ENCODE measurements at regions of chr1 and their contacts with region 1.

Region 1: GRCh38 chr1:237386362-237387143 is 344.6 kb downstream of the RYR2 start:
- DNase-seq: peak; percentile 38
- ATAC-seq: no peak
- H3K4me3 ChIP-seq: no peak overlapping the region
- H3K27ac ChIP-seq: no peak overlapping the region
- H3K4me1 ChIP-seq: no peaks in the 10 kb centered on the region
- H3K27me3 ChIP-seq: no peaks in the 10 kb centered on the region
- CTCF ChIP-seq: peak; percentile 82; the same call in 1 of the 2 replicates

Region 2: DNA sequence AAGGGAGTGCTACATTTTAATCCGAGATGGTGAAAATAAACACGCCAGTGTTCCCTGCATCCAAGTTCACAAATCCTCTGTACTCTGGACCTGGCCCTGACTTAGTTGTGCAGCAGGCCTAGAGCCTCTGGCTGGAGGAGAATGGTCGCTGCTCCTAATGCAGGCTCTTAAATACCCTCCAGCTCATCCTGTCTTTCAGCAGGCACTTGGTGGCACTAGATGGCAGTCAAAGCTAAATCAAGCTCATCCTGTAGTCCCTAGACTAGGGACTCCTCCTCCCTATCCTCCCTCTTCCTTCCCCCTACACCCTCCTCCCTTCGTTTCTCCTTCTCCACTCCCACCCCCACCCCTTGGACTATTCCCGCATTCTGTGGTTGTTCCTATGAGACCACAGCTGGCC is 633.0 kb before region 1 on chr1:
- CTCF ChIA-PET with region 1: no interaction called
- POLR2A ChIA-PET with region 1: no interaction called
- in situ Hi-C with region 1: no loop called
- intact Hi-C with region 1: loop called (anchors 5 kb)
- DNase-seq: no peak
- ATAC-seq: peak; percentile 96
- H3K4me3 ChIP-seq: no peak overlapping the region
- H3K27ac ChIP-seq: no peak overlapping the region
- H3K4me1 ChIP-seq: no peaks in the 10 kb centered on the region
- H3K27me3 ChIP-seq: no peaks in the 10 kb centered on the region
- CTCF ChIP-seq: peak; percentile 72

Region 3: DNA sequence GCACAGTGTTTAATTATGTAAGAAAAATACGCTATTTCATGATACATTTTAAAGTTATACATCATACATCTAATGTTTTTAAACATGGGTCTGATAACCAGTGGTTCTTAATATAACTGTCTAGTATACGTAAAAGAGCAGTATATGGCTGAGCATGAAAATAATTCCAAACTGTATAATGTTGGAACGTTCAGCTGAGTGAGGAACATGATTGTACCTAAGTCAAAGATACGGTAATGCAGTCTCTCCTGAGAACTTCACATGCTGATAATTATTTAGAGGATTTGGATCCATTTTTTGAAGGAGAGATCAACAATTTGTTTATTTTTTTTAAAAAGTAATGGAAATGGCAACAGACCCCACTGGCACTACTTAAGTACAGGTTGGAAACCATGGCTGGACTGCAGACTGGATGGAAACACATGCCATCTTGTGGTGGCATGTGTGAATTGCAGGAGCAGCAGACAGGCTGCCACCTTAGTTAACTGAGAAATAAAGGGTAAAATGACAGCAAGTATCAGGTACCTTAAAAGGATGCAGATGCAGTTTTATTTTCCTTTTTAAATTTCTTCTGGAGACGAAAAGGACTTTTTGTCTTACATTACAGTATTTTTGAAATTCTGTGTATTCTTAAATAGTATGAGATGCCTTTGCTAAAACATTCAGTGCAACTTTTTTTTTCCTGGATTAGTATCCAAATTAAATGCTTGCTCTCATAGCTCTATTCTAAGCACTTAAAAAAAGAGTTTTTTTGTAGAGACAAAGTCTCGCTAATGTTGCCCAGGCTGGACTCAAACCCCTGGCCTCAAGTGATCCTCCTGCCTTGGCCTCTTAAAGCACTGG is 517.7 kb before region 1 on chr1:
- CTCF ChIA-PET with region 1: no interaction called
- POLR2A ChIA-PET with region 1: no interaction called
- in situ Hi-C with region 1: no loop called
- intact Hi-C with region 1: loop called (anchors 2 kb)
- DNase-seq: peak; percentile 64
- ATAC-seq: peak; percentile 96
- H3K4me3 ChIP-seq: no peak overlapping the region
- H3K27ac ChIP-seq: no peak overlapping the region
- H3K4me1 ChIP-seq: no peaks in the 10 kb centered on the region
- H3K27me3 ChIP-seq: no peaks in the 10 kb centered on the region
- CTCF ChIP-seq: peak; percentile 95

Region 4: GRCh38 chr1:237411621-237412020 is 25.1 kb after region 1 on chr1:
- CTCF ChIA-PET with region 1: no interaction called
- POLR2A ChIA-PET with region 1: no interaction called
- in situ Hi-C with region 1: no loop called
- intact Hi-C with region 1: no loop called
- DNase-seq: no peak
- ATAC-seq: no peak
- H3K4me3 ChIP-seq: no peak overlapping the region
- H3K27ac ChIP-seq: no peak overlapping the region
- H3K4me1 ChIP-seq: no peaks in the 10 kb centered on the region
- H3K27me3 ChIP-seq: no peaks in the 10 kb centered on the region
- CTCF ChIP-seq: no peak

Region 5: GRCh38 chr1:238364214-238364892 is 977.8 kb after region 1 on chr1:
- CTCF ChIA-PET with region 1: interaction called, 10 read pairs
- POLR2A ChIA-PET with region 1: no interaction called
- in situ Hi-C with region 1: no loop called
- intact Hi-C with region 1: no loop called
- DNase-seq: no peak
- ATAC-seq: no peak
- H3K4me3 ChIP-seq: no peak overlapping the region
- H3K27ac ChIP-seq: no peak overlapping the region
- H3K4me1 ChIP-seq: no peaks in the 10 kb centered on the region
- H3K27me3 ChIP-seq: no peaks in the 10 kb centered on the region
- CTCF ChIP-seq: no peak

Measured in Panc1 (cell line).